ENCODE measurements at regions of chr21 and their contacts with region 1.

Region 1: GRCh38 chr21:34345091-34345871 is 18.5 kb upstream of the KCNE2 start:
- DNase-seq: no peak
- H3K4me3 ChIP-seq: no peak overlapping the region
- H3K27ac ChIP-seq: peak overlapping the region; percentile 39 to 69 (median 60)
- H3K4me1 ChIP-seq: peaks cover 0 to 12% (median 6%) of the 10 kb centered on the region in 4 donors
- H3K27me3 ChIP-seq: no peaks in the 10 kb centered on the region
- CTCF ChIP-seq: no peak
- EP300 ChIP-seq: no peak
- POLR2A ChIP-seq: no peak

Region 2: GRCh38 chr21:33924079-33924765 is 421.1 kb before region 1 on chr21:
- in situ Hi-C with region 1: no loop called
- intact Hi-C with region 1: loop called (anchors 2 kb)
- DNase-seq: peak; percentile 94
- H3K4me3 ChIP-seq: peak overlapping the region in 1 of 4 donors; percentile 20
- H3K27ac ChIP-seq: peak overlapping the region; percentile 28 to 54 (median 38)
- H3K4me1 ChIP-seq: peaks cover 4 to 10% (median 8%) of the 10 kb centered on the region in 4 donors
- H3K27me3 ChIP-seq: no peaks in the 10 kb centered on the region
- CTCF ChIP-seq: peak; percentile 89 to 95 (median 91)
- EP300 ChIP-seq: no peak
- POLR2A ChIP-seq: no peak

Region 3: GRCh38 chr21:34745557-34746255 is 400.4 kb after region 1 on chr21:
- in situ Hi-C with region 1: no loop called
- intact Hi-C with region 1: no loop called
- DNase-seq: peak; percentile 65
- H3K4me3 ChIP-seq: no peak overlapping the region
- H3K27ac ChIP-seq: no peak overlapping the region
- H3K4me1 ChIP-seq: peaks cover 0 to 8% (median 2%) of the 10 kb centered on the region in 4 donors
- H3K27me3 ChIP-seq: no peaks in the 10 kb centered on the region
- CTCF ChIP-seq: peak; percentile 83 to 93 (median 86)
- EP300 ChIP-seq: no peak
- POLR2A ChIP-seq: no peak

Measured in transverse colon (tissue), 4 donors.